IMR-90 (cell line): ENCODE measurements at regions of chr2 and their contacts with region 1.

Region 1: GRCh38 chr2:191299010-191299409 is 53.8 kb downstream of the MYO1B start:
- DNase-seq: peak; percentile 34
- ATAC-seq: peak; percentile 36
- H3K4me3 ChIP-seq: no peak overlapping the region
- H3K27ac ChIP-seq: peak overlapping the region; percentile 86; the same call in 1 of the 2 replicates
- H3K4me1 ChIP-seq: peaks cover 33% of the 10 kb centered on the region
- H3K27me3 ChIP-seq: no peaks in the 10 kb centered on the region
- CTCF ChIP-seq: peak; percentile 56
- POLR2A ChIP-seq: no peak
- RAD21 ChIP-seq: peak; percentile 64

Region 2: DNA sequence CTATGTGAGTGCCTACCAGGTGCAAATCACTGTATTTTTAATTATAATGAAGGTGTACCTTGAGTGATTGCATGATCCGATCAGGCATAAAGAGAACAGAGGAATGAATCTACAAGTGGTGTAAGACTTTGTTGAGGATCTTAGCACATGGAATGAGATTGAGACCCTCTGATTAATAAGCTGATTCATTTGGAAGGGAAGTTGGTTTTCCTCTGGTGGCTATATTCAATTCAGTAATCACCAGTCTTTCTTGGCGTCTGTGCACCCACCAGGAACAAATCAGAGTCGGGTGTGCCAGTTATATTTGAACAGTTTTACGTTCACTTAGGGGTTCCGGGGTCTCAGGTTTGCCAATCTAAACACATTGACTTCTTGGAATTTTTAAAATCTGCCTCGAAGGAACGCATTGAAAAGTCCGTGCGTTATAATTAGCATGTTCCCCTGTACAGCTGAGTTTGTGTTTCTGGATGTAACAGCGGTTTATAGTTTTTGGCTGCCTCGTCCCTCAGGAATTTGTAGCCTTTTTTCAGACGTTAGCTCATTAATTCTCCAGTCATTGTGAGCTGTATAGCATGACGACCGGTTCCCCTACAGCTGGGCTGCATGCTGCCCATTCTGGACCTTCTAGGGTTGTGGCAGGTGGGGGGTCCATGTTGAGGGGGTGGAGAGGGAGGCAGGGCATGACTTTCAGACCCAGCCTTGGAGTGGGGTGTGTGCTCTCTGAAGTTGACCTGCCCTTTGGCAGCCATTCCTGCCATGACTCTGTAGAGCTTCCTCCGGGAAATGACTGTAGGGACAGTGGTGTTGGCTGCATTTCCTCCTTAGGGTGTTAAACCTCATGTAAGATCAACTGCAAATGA is 33.5 kb before region 1 on chr2:
- CTCF ChIA-PET with region 1: no interaction called
- POLR2A ChIA-PET with region 1: no interaction called
- dilution Hi-C with region 1: no loop called
- in situ Hi-C with region 1: no loop called
- intact Hi-C with region 1: loop called (anchors 5 kb)
- DNase-seq: peak; percentile 70
- ATAC-seq: peak; percentile 52
- H3K4me3 ChIP-seq: no peak overlapping the region
- H3K27ac ChIP-seq: peak overlapping the region; percentile 70
- H3K4me1 ChIP-seq: peaks cover 25% of the 10 kb centered on the region
- H3K27me3 ChIP-seq: no peaks in the 10 kb centered on the region
- CTCF ChIP-seq: no peak
- POLR2A ChIP-seq: no peak
- RAD21 ChIP-seq: no peak

Region 3: GRCh38 chr2:191369036-191369435 is 70.0 kb after region 1 on chr2:
- CTCF ChIA-PET with region 1: interaction called, 4 read pairs
- POLR2A ChIA-PET with region 1: no interaction called
- dilution Hi-C with region 1: no loop called
- in situ Hi-C with region 1: no loop called
- intact Hi-C with region 1: loop called (anchors 5 kb)
- DNase-seq: no peak
- ATAC-seq: no peak
- H3K4me3 ChIP-seq: no peak overlapping the region
- H3K27ac ChIP-seq: no peak overlapping the region
- H3K4me1 ChIP-seq: peaks cover 21% of the 10 kb centered on the region
- H3K27me3 ChIP-seq: no peaks in the 10 kb centered on the region
- CTCF ChIP-seq: peak; percentile 46
- POLR2A ChIP-seq: no peak
- RAD21 ChIP-seq: peak; percentile 39; the same call in 1 of the 2 replicates

Region 4: DNA sequence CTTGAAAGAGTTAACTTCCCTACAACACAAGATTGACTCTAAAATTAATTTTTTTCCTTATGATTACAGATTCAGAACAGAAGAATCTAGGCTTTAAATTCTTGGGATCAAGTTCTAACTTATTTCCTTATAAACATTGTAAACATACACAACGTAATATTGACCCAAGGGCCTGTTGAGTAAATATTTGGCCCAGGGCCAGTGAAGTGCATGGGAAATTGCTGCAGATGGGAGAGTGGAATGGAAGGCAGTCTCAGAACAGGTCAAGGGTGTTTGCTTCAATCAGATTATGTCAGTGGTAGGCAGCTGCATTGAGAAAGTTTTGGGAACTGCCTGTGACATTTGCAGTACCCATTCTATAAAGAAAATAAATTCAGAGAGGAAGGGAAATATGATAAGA is 83.8 kb after region 1 on chr2:
- CTCF ChIA-PET with region 1: interaction called, 3 read pairs
- POLR2A ChIA-PET with region 1: no interaction called
- dilution Hi-C with region 1: no loop called
- in situ Hi-C with region 1: no loop called
- intact Hi-C with region 1: loop called (anchors 5 kb)
- DNase-seq: peak; percentile 81
- ATAC-seq: peak; percentile 31
- H3K4me3 ChIP-seq: no peak overlapping the region
- H3K27ac ChIP-seq: peak overlapping the region; percentile 19; the same call in 1 of the 2 replicates
- H3K4me1 ChIP-seq: peaks cover 25% of the 10 kb centered on the region
- H3K27me3 ChIP-seq: no peaks in the 10 kb centered on the region
- CTCF ChIP-seq: no peak
- POLR2A ChIP-seq: no peak
- RAD21 ChIP-seq: no peak

Region 5: GRCh38 chr2:191401287-191401686 is 102.3 kb after region 1 on chr2:
- CTCF ChIA-PET with region 1: no interaction called
- POLR2A ChIA-PET with region 1: no interaction called
- dilution Hi-C with region 1: no loop called
- in situ Hi-C with region 1: no loop called
- intact Hi-C with region 1: loop called (anchors 5 kb)
- DNase-seq: peak; percentile 56
- ATAC-seq: peak; percentile 72
- H3K4me3 ChIP-seq: no peak overlapping the region
- H3K27ac ChIP-seq: peak overlapping the region; percentile 85; the same call in 1 of the 2 replicates
- H3K4me1 ChIP-seq: peaks cover 27% of the 10 kb centered on the region
- H3K27me3 ChIP-seq: no peaks in the 10 kb centered on the region
- CTCF ChIP-seq: no peak
- POLR2A ChIP-seq: no peak
- RAD21 ChIP-seq: no peak

Region 6: GRCh38 chr2:191501561-191502168 is 202.7 kb after region 1 on chr2:
- CTCF ChIA-PET with region 1: interaction called, 3 read pairs
- POLR2A ChIA-PET with region 1: no interaction called
- dilution Hi-C with region 1: no loop called
- in situ Hi-C with region 1: no loop called
- intact Hi-C with region 1: loop called (anchors 1 kb)
- DNase-seq: peak; percentile 70
- ATAC-seq: peak; percentile 69
- H3K4me3 ChIP-seq: no peak overlapping the region
- H3K27ac ChIP-seq: no peak overlapping the region
- H3K4me1 ChIP-seq: peaks cover 4% of the 10 kb centered on the region; the same call in 1 of the 2 replicates
- H3K27me3 ChIP-seq: no peaks in the 10 kb centered on the region
- CTCF ChIP-seq: peak; percentile 90
- POLR2A ChIP-seq: no peak
- RAD21 ChIP-seq: peak; percentile 94